Thyroid gland (tissue), 4 donors: ENCODE measurements at regions of chr6 and their contacts with region 1.

Region 1: GRCh38 chr6:34608321-34609091 is 52.4 kb upstream of the SPDEF start:
- DNase-seq: no peak
- H3K4me3 ChIP-seq: no peak overlapping the region
- H3K27ac ChIP-seq: peak overlapping the region in 1 of 3 donors; percentile 13
- H3K4me1 ChIP-seq: peaks cover 0 to 8% of the 10 kb centered on the region in 2 donors
- H3K27me3 ChIP-seq: no peaks in the 10 kb centered on the region
- CTCF ChIP-seq: no peak
- POLR2A ChIP-seq: no peak

Region 2: GRCh38 chr6:34526992-34527728 is 81.3 kb before region 1 on chr6:
- intact Hi-C with region 1: loop called (anchors 5 kb)
- DNase-seq: peak; percentile 95 to 97
- H3K4me3 ChIP-seq: peak overlapping the region in 1 of 3 donors; percentile 1
- H3K27ac ChIP-seq: peak overlapping the region in 1 of 3 donors; percentile 0
- H3K4me1 ChIP-seq: peaks cover 15 to 22% of the 10 kb centered on the region in 2 donors
- H3K27me3 ChIP-seq: no peaks in the 10 kb centered on the region
- CTCF ChIP-seq: peak; percentile 33 to 87 (median 68)
- POLR2A ChIP-seq: no peak

Region 3: GRCh38 chr6:34560366-34561226 is 47.9 kb before region 1 on chr6:
- intact Hi-C with region 1: no loop called
- DNase-seq: no peak
- H3K4me3 ChIP-seq: no peak overlapping the region
- H3K27ac ChIP-seq: no peak overlapping the region
- H3K4me1 ChIP-seq: no peaks in the 10 kb centered on the region
- H3K27me3 ChIP-seq: no peaks in the 10 kb centered on the region
- CTCF ChIP-seq: peak in 1 of 6 experiments; percentile 4
- POLR2A ChIP-seq: no peak